CD14-positive monocyte (primary cell): ENCODE measurements at regions of chr19 and their contacts with region 1.

Region 1: GRCh38 chr19:46192992-46193650 is 36.4 kb upstream of the IGFL1 start:
- DNase-seq: peak; percentile 95 to 98 (median 96)
- H3K4me3 ChIP-seq: peak overlapping the region; percentile 2 to 32 (median 9)
- H3K4me3 Mint-ChIP-seq: peak overlapping the region; percentile 71 to 83
- H3K27ac ChIP-seq: peak overlapping the region; percentile 91 to 96
- H3K27ac Mint-ChIP-seq: peak overlapping the region; percentile 98 to 100 (median 99)
- H3K4me1 ChIP-seq: peaks cover 31 to 34% of the 10 kb centered on the region in 2 donors
- H3K4me1 Mint-ChIP-seq: peaks cover 38% of the 10 kb centered on the region
- H3K27me3 ChIP-seq: peaks cover 0 to 2% of the 10 kb centered on the region in 2 donors
- H3K27me3 Mint-ChIP-seq: peaks cover 18 to 27% (median 26%) of the 10 kb centered on the region in 3 donors
- CTCF ChIP-seq: no peak

Region 2: GRCh38 chr19:46016426-46017094 is 176.6 kb before region 1 on chr19:
- intact Hi-C with region 1: loop called in 1 of 2 experiments (anchors 10 kb)
- DNase-seq: peak; percentile 72 to 83 (median 75)
- H3K4me3 ChIP-seq: peak overlapping the region; percentile 76 to 92 (median 84)
- H3K4me3 Mint-ChIP-seq: peak overlapping the region; percentile 92 to 98
- H3K27ac ChIP-seq: no peak overlapping the region
- H3K27ac Mint-ChIP-seq: peak overlapping the region in 1 of 7 donors; percentile 87
- H3K4me1 ChIP-seq: peaks cover 18 to 29% of the 10 kb centered on the region in 2 donors
- H3K4me1 Mint-ChIP-seq: peaks cover 19% of the 10 kb centered on the region
- H3K27me3 ChIP-seq: peaks cover 16 to 37% of the 10 kb centered on the region in 2 donors
- H3K27me3 Mint-ChIP-seq: peaks cover 35 to 60% (median 41%) of the 10 kb centered on the region in 3 donors
- CTCF ChIP-seq: peak; percentile 90

Region 3: GRCh38 chr19:46030812-46031550 is 162.1 kb before region 1 on chr19:
- intact Hi-C with region 1: loop called in 1 of 2 experiments (anchors 2 kb)
- DNase-seq: no peak
- H3K4me3 ChIP-seq: no peak overlapping the region
- H3K4me3 Mint-ChIP-seq: no peak overlapping the region
- H3K27ac ChIP-seq: no peak overlapping the region
- H3K27ac Mint-ChIP-seq: peak overlapping the region in 1 of 7 donors; percentile 78
- H3K4me1 ChIP-seq: peaks cover 9% of the 10 kb centered on the region in 2 donors
- H3K4me1 Mint-ChIP-seq: peaks cover 12% of the 10 kb centered on the region
- H3K27me3 ChIP-seq: peaks cover 0 to 8% of the 10 kb centered on the region in 2 donors
- H3K27me3 Mint-ChIP-seq: peaks cover 22 to 54% (median 23%) of the 10 kb centered on the region in 3 donors
- CTCF ChIP-seq: no peak